GM13976 (cell line): ENCODE measurements at regions of chr4 and their contacts with region 1.

Region 1: GRCh38 chr4:1809754-1810511 is 16.8 kb downstream of the FGFR3 start:
- DNase-seq: peak; percentile 93
- CTCF ChIP-seq: peak; percentile 92

Region 2: DNA sequence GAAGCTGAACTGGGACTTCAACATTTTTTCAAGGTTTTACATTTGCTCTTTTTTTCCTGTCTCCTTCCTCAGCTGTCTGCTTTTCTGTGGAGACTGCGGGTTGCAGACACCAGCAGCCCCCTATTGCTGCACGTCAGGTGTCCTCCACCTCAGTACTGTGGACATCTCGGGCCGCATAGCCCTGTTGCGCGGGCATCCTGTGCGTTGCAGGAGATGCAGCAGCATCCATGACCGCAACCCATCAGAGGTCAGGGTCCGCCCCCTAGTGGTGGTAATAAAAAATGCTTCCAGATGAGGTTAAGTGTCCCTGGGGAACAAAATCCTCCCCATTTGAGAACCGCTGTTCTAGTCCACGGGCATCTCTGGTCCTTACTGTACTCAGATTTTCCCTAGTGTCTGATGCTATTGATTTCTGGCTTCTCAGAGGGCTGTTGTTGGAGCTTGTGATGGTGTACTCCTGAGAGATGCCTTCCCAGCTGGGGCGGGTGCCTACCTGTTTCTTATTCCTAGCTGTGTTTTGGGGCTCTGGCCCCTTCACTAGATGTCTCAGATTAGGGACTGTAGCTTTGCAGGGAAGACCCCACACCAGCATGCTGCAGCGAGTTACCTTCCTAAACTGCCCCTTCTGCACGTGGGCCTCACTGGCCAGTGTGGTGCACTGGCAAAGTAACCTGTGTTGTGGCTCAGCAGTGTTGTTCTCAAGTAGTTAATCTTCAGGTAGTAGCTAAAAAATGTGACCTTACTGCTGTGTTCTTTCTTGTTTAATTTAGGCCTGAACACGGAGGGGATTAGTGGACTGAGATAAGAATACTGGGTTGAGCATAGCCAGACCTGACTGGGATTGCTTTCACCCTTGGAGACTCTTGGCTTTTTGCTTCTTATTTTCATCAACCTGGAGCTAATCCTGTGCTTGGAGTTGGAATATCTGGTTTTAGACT is 89.5 kb after region 1 on chr4:
- in situ Hi-C with region 1: loop called (anchors 10 kb)
- DNase-seq: peak; percentile 87
- CTCF ChIP-seq: peak; percentile 84

Region 3: GRCh38 chr4:2545321-2546013 is 735.5 kb after region 1 on chr4:
- in situ Hi-C with region 1: no loop called
- DNase-seq: no peak
- CTCF ChIP-seq: no peak